Esophagus muscularis mucosa (tissue), 4 donors: ENCODE measurements at regions of chr6 and their contacts with region 1.

Region 1: GRCh38 chr6:41705996-41706835 is 29.2 kb downstream of the TFEB start:
- DNase-seq: no peak
- H3K4me3 ChIP-seq: peak overlapping the region; percentile 0 to 24 (median 4)
- H3K27ac ChIP-seq: peak overlapping the region; percentile 77 to 88 (median 82)
- H3K4me1 ChIP-seq: peaks cover 58 to 79% (median 72%) of the 10 kb centered on the region in 4 donors
- H3K27me3 ChIP-seq: no peaks in the 10 kb centered on the region
- CTCF ChIP-seq: peak; percentile 73 to 82 (median 73)
- EP300 ChIP-seq: no peak
- POLR2A ChIP-seq: no peak

Region 2: DNA sequence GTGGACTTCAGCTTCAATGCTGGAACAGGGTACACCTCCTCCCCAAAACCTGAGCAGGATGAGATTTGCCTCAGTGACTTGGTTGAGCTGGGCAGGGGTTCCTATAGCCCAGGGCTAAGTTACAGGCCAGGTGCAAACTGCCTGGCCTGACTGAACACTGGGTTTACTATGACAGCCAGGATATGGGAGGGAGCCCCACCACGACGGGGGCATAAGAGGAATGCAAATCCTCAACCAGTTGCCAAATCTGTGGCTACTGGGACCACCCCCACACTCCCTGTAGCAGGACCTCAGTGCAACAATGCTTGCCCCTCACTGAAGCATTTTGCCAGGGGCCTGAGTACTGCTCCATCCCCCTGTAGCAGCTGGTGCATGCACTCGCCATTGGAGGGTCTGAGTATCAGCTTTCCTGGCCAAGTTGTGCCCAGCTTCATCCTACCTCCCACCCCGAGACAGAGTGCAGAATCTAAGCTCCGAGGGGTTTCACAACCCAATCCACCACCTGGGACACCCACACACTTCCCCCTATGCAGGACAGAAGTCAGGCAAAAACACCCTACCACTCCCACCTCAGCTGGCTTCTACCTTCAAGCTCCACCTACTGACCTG is 450.5 kb before region 1 on chr6:
- intact Hi-C with region 1: no loop called
- DNase-seq: peak; percentile 81
- H3K4me3 ChIP-seq: no peak overlapping the region
- H3K27ac ChIP-seq: no peak overlapping the region
- H3K4me1 ChIP-seq: peaks cover 0 to 10% (median 0%) of the 10 kb centered on the region in 4 donors
- H3K27me3 ChIP-seq: peaks cover 0 to 3% (median 0%) of the 10 kb centered on the region in 4 donors
- CTCF ChIP-seq: no peak
- EP300 ChIP-seq: no peak
- POLR2A ChIP-seq: no peak

Region 3: GRCh38 chr6:41735427-41736356 is 29.5 kb after region 1 on chr6 and contains the start of gene TFEB:
- intact Hi-C with region 1: loop called (anchors 2 kb)
- DNase-seq: peak; percentile 97
- H3K4me3 ChIP-seq: peak within 1 kb of the TSS; percentile 90 to 98 (median 97)
- H3K27ac ChIP-seq: peak within 1 kb of the TSS; percentile 97 to 99 (median 98)
- H3K4me1 ChIP-seq: peaks cover 36 to 43% (median 40%) of the 10 kb centered on the region in 4 donors
- H3K27me3 ChIP-seq: peaks cover 0 to 6% (median 0%) of the 10 kb centered on the region in 4 donors
- CTCF ChIP-seq: peak; percentile 92 to 99 (median 92)
- EP300 ChIP-seq: no peak
- POLR2A ChIP-seq: no peak
- total RNA-seq, gene TFEB: 24.2 to 46.7 (median 33.1) TPM